ENCODE measurements at regions of chr18 and their contacts with region 1.

Region 1: DNA sequence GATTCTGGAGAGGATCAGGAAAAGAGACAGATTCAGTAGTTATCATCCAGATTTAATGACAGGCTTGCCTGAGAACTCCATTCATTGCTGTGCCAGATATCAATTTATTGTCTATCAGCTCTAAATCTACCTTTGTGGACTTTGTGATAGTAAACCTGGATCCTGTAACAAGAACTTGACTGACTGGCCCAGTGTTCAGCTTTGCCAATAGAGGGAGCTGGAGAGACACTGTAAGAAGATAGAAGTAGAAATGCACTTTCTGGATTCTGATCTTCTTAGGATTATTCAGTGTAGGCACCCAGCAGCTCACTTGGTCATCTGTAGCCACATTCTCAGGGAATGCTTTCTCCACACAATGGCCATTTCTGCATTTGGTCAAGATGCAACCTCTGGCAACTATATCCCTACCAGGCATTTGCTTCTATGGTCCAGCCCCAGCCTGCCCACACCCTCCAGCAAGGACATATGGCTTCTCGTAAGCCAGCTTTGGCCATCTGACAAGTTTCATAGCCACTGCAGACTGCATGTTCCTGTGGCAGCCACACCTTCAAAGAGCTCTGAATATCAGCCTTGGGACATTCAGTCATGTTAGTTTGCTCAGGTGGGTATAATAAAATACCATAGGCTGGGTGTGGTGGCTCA is 6.1 kb upstream of the SERPINB8 start:
- DNase-seq: no peak
- H3K4me3 ChIP-seq: no peak overlapping the region
- H3K27me3 ChIP-seq: peaks cover 6% of the 10 kb centered on the region
- CTCF ChIP-seq: peak; percentile 94

Region 2: DNA sequence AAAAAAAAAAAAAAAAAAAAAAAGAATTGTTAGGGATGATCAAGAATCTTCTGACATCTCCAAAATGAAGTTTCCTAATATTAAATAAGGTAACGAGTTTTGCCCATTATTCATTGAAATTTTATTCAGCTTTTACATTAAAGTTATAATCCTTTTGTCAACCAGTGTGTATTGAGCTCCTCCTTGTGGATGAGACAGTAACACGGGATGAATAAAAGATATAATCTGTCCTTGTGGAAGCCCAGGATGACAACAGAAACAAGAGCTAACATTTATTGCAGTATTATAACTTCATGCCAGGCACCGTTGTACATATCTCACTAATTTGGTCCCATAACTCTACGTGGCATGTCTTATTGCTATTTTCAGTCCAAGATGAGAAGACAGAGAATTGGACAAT is 222.0 kb before region 1 on chr18:
- CTCF ChIA-PET with region 1: no interaction called
- POLR2A ChIA-PET with region 1: no interaction called
- DNase-seq: no peak
- H3K4me3 ChIP-seq: no peak overlapping the region
- H3K27me3 ChIP-seq: no peaks in the 10 kb centered on the region
- CTCF ChIP-seq: peak; percentile 63

Region 3: GRCh38 chr18:63951302-63951705 is 12.4 kb before region 1 on chr18:
- CTCF ChIA-PET with region 1: interaction called, 23 read pairs
- POLR2A ChIA-PET with region 1: no interaction called
- DNase-seq: no peak
- H3K4me3 ChIP-seq: no peak overlapping the region
- H3K27me3 ChIP-seq: no peaks in the 10 kb centered on the region
- CTCF ChIP-seq: peak; percentile 26

Region 4: DNA sequence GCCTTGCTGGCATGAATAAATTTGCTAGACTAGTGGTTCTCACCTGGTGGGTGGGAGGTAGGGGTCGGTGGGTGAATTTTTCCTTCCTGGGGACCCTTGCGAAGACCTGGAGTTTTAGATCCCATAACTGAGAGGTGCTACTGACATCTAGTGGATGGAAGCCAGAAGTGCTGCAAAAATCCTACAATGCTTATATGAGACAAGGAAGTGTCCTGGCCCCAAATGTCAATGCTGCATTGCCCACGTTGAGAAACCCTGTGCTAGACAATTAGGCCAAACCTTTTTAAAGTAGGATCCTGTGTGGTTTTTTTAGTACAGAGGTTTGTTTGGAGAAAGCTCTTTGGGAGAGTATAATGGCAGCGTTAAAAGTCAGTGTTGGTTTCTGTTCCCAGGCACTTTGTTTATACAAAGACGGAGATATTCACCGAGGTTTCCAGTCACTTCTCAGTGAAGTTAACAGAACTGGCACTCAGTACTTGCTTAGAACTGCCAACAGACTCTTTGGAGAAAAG is 15.7 kb after region 1 on chr18:
- CTCF ChIA-PET with region 1: interaction called, 51 read pairs
- POLR2A ChIA-PET with region 1: no interaction called
- DNase-seq: peak; percentile 17
- H3K4me3 ChIP-seq: peak overlapping the region; percentile 7
- H3K27me3 ChIP-seq: no peaks in the 10 kb centered on the region
- CTCF ChIP-seq: peak; percentile 94

Region 5: DNA sequence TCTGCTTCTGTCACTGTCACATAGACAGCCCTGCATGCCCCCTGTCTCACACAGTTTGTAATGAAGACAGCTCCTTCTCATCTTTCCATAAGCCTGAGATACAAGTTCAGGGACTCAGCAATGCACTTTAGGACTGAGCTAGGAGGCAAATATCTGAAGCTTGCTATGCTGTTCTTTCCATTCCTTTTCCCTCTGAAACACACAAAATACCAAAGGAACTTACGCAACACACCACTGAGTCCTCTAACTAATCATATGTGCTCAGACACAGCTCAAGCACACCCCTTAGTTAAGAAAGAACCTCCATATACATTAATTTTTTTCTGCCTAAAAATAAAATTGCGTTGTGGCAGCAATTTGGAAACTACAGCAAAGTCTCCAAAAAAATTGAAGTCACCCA is 24.0 kb after region 1 on chr18:
- CTCF ChIA-PET with region 1: interaction called, 23 read pairs
- POLR2A ChIA-PET with region 1: no interaction called
- DNase-seq: no peak
- H3K4me3 ChIP-seq: no peak overlapping the region
- H3K27me3 ChIP-seq: no peaks in the 10 kb centered on the region
- CTCF ChIP-seq: no peak

Region 6: GRCh38 chr18:63994783-63995399 is 31.2 kb after region 1 on chr18:
- CTCF ChIA-PET with region 1: interaction called, 67 read pairs
- POLR2A ChIA-PET with region 1: no interaction called
- DNase-seq: peak; percentile 14
- H3K4me3 ChIP-seq: no peak overlapping the region
- H3K27me3 ChIP-seq: no peaks in the 10 kb centered on the region
- CTCF ChIP-seq: peak; percentile 90

Region 7: DNA sequence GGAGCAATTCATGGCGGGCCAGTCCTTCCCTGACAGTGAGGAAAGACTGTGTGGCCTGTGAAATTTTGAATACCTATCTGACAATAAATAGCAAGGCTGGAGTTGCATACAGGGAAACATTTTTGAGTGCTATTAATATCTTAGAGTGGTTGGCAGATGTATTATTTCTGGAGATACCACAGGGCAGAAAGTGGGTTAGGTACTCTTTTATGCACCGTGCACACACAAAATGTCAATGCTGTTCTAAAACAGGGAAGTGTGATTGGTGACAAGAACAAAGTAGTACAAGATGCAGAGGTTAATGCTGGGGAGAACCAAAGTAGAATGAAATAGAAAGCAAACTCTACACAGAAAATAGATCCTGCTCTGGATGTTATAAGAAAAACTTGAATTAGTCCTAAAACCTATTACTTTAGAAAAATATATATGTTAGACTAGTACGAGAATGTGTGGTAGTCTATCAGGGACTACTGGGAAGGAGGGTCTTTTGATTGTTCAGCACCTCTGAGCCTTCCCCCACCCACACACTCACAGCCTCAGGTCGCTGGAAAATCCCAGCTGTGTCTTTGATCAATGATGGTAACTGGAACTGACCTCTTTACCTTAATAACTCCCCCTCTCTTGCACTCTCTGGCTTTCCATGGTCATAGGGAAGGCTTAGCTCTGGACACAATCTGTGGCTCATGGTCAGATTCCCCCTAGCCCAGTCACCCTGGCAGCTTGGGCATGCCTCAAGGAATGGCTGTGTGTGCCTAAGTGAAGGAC is 64.4 kb after region 1 on chr18:
- CTCF ChIA-PET with region 1: no interaction called
- POLR2A ChIA-PET with region 1: no interaction called
- DNase-seq: no peak
- H3K4me3 ChIP-seq: no peak overlapping the region
- H3K27me3 ChIP-seq: no peaks in the 10 kb centered on the region
- CTCF ChIP-seq: no peak